Activated CD4-positive, alpha-beta T cell treated with anti-CD3 and anti-CD28 coated beads, Interleukin-2, amount 10 ng/mL, durations not matched to agents 24 days and 14 days (primary cell): ENCODE measurements at regions of chr1 and their contacts with region 1.

Region 1: GRCh38 chr1:200628223-200628881 is 7.8 kb upstream of the KIF14 start:
- DNase-seq: peak; percentile 69
- H3K4me3 Mint-ChIP-seq: peak overlapping the region; percentile 58
- H3K27ac Mint-ChIP-seq: peak overlapping the region; percentile 62
- H3K4me1 Mint-ChIP-seq: peaks cover 34% of the 10 kb centered on the region
- H3K27me3 Mint-ChIP-seq: peaks cover 8% of the 10 kb centered on the region

Region 2: DNA sequence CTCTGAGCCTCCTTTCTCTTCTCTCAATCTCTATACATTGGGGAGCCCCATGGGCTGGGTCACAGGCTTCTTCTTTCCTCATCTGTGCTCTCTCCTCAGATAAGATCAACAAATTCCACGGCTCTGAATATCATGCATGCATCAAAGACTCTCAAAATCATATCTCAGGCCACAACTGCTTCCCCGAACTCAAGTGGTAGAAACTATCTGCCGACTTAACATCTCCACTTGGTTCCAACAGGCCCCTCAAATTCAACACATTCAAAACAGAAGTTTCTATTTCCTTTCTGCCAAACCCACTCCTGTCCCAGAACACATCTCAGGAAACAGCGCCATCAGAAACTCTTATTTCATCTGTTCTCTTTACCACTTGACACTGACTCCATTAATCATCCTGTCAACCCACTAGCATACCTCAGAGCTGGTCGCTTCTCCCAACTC is 24.7 kb after region 1 on chr1:
- intact Hi-C with region 1: loop called (anchors 2 kb)
- DNase-seq: no peak
- H3K4me3 Mint-ChIP-seq: peak overlapping the region; percentile 24
- H3K27ac Mint-ChIP-seq: peak overlapping the region; percentile 46
- H3K4me1 Mint-ChIP-seq: peaks cover 26% of the 10 kb centered on the region
- H3K27me3 Mint-ChIP-seq: no peaks in the 10 kb centered on the region